ENCODE measurements at regions of chr2 and their contacts with region 1.

Region 1: GRCh38 chr2:97995734-97996624 is at the start of gene TMEM131:
- DNase-seq: peak; percentile 94
- H3K4me3 Mint-ChIP-seq: peak within 1 kb of the TSS; percentile 97
- H3K27ac Mint-ChIP-seq: peak within 1 kb of the TSS; percentile 98
- H3K4me1 Mint-ChIP-seq: peaks cover 39% of the 10 kb centered on the region
- H3K27me3 Mint-ChIP-seq: peaks cover 4% of the 10 kb centered on the region
- total RNA-seq, gene TMEM131: 36.5 and 38.4 TPM in 2 replicates

Region 2: DNA sequence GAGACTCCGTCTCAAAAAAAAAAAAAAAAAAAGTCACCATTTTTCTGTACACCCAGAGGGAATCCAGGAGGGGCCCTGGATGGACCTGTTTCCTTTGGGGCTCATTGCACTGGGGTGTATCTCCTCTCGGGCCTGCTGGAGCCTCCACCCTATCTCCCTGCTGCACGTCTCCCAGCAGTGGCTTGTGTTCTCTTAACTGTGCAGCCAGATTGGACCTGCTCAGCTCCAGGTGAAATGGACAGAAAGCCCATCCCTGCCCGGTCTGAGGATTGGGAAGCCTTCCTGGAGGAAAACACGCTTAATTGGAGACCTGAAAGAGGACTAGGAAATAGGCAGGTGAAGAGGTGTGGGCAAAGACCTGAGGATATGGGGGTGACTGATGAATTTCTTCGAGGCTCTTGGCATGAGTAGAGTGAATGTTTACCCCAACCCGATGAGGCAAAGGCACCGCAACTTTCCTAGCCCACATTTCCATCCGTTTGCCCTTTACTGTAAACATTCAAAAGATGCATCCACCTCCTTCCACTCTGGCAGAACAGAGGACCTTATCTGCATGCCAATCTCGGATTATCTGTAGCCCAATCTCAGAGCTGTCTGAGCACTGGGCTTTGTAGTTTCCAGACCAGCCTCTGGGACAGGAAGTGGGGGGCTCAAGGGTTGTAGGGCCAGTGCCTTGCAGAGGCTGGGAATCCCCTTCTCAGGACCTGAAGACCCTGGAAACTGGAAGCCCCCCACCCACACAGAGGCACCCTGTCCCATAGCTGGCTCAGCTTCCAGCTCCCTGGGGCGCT is 285.2 kb before region 1 on chr2:
- intact Hi-C with region 1: loop called (anchors 1 kb)
- DNase-seq: no peak
- H3K4me3 Mint-ChIP-seq: peak overlapping the region; percentile 94
- H3K27ac Mint-ChIP-seq: peak overlapping the region; percentile 99
- H3K4me1 Mint-ChIP-seq: peaks cover 44% of the 10 kb centered on the region
- H3K27me3 Mint-ChIP-seq: peaks cover 6% of the 10 kb centered on the region

Region 3: DNA sequence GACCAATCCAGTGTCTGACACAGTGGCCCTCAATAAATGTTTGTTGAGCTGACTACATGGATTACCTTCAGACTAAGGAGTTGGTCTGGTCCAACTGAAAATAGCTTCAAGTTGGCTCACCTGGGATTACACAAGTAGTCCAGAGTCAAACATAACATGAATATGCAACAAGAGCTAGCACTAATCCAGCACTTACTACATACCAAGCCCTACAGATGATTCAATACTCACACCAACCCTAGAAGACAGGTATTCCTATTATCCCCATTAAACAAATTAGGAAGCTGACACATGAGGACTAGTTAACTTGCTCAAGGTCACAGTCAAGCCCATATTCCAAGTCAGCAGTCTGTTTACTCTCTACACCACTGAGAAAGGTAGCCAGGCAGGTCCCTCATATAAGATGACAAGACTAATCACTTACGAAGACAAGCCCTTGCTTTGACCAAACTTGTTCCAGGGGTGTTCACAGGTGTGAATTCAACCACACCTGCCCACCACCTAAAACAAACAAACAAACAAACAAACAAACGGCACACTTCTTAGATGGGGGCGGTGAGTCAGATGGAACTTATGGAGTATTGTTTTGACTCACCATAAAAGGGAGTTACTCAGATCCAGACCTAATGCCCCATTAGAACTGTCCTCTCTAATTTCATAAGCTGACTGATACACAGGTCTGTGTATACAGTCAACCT is 29.3 kb before region 1 on chr2:
- intact Hi-C with region 1: loop called (anchors 2 kb)
- DNase-seq: no peak
- H3K4me3 Mint-ChIP-seq: no peak overlapping the region
- H3K27ac Mint-ChIP-seq: peak overlapping the region; percentile 46
- H3K4me1 Mint-ChIP-seq: peaks cover 52% of the 10 kb centered on the region
- H3K27me3 Mint-ChIP-seq: no peaks in the 10 kb centered on the region

Region 4: DNA sequence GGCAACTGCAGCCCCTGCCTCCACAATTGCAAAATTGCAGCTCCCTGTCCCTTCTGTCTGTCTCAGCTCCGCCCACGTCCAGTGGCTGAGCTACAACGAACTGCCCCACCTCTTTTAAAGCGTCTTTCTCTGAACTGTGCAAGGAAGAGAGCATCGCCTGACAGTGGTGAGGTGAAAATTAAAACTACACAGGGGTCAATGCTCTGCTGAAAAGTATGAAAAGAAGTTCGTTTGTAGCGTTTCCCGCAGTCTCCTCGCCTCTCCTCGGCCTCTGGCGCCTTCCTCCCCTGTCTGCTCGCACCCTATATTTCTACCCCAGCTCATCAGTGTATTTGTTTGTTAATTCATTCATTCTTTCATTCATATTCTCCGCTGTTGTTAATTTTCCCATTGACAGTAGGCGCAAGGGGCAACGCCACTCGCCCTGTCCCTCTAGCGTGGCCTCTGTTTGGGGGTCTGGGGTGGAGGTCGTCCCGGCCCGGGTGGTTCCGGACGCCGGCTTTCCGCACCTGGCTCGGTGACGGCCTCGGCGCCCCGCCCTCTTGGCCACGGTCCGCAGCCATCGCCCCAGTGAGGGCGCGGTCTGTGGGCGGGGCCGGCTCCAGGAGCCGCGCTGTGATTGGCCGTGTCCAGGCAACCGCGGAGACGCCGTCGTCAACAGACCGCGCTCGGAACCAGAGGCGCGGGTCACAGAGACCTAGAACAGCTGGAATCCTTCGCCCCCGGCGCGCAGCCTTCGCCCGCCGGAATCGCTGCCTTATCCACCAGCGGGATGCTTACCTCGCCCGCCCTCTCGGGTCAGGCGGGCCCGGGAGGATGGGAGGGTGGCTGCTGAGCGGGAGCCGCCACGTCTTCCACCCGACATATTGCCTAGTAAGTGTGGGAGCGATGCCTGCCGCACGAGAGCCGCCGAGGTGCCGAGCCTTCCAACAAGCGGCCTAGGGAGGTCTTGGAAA is 90.8 kb after region 1 on chr2 and contains the start of gene VWA3B:
- intact Hi-C with region 1: loop called (anchors 1 kb)
- DNase-seq: peak; percentile 57
- H3K4me3 Mint-ChIP-seq: peak within 1 kb of the TSS; percentile 77
- H3K27ac Mint-ChIP-seq: no peak within 1 kb of the TSS
- H3K4me1 Mint-ChIP-seq: peaks cover 25% of the 10 kb centered on the region
- H3K27me3 Mint-ChIP-seq: peaks cover 36% of the 10 kb centered on the region
- total RNA-seq, gene VWA3B: not detected in 2 replicates

Region 5: GRCh38 chr2:98324181-98324580 is 328.2 kb after region 1 on chr2:
- intact Hi-C with region 1: no loop called
- DNase-seq: no peak
- H3K4me3 Mint-ChIP-seq: no peak overlapping the region
- H3K27ac Mint-ChIP-seq: no peak overlapping the region
- H3K4me1 Mint-ChIP-seq: no peaks in the 10 kb centered on the region
- H3K27me3 Mint-ChIP-seq: peaks cover 12% of the 10 kb centered on the region

Region 6: DNA sequence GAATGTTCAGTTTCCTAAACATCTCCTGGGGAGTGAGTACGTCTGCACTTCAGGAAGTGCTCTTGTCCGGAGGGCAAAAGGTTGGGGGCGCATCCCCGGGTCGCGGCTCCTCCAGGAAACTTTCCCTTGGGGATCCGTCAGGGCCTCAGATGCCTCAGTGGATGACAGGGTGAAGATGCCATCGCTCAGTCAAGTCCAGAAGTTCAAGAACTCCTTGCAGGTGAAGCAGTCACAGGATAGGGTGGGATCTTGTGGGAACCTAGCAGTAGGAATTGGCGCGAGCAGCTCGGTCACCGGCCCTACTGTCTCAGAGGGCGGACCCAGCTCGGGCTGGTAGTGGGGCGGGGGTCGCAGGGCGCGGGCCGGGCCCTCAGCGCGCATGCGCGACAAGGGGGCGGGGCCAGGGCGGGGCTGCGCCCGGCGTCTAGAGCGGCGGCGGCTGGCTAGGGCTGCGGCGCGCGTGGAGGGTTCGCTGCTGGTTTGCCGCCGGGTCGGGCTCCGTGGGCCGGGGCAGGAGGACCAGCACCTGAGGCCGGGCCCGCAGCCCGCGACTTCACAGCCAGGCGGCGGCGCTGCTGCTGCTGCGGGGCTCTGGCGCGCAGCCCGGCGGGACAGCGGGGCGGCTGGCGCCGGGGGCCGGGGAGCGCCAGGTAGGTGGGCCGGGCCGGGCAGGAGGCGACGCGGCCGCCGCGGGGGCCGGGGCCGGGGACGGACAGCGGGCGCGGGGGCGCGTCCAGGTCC is 448.6 kb after region 1 on chr2 and contains the start of gene INPP4A:
- intact Hi-C with region 1: loop called (anchors 5 kb)
- DNase-seq: peak; percentile 71
- H3K4me3 Mint-ChIP-seq: peak within 1 kb of the TSS; percentile 95
- H3K27ac Mint-ChIP-seq: peak within 1 kb of the TSS; percentile 93
- H3K4me1 Mint-ChIP-seq: peaks cover 56% of the 10 kb centered on the region
- H3K27me3 Mint-ChIP-seq: no peaks in the 10 kb centered on the region
- total RNA-seq, gene INPP4A: 54.6 and 55.7 TPM in 2 replicates